Activated CD4-positive, alpha-beta memory T cell treated with anti-CD3 and anti-CD28 coated beads for 36 hours (primary cell): ENCODE measurements at regions of chr6 and their contacts with region 1.

Region 1: DNA sequence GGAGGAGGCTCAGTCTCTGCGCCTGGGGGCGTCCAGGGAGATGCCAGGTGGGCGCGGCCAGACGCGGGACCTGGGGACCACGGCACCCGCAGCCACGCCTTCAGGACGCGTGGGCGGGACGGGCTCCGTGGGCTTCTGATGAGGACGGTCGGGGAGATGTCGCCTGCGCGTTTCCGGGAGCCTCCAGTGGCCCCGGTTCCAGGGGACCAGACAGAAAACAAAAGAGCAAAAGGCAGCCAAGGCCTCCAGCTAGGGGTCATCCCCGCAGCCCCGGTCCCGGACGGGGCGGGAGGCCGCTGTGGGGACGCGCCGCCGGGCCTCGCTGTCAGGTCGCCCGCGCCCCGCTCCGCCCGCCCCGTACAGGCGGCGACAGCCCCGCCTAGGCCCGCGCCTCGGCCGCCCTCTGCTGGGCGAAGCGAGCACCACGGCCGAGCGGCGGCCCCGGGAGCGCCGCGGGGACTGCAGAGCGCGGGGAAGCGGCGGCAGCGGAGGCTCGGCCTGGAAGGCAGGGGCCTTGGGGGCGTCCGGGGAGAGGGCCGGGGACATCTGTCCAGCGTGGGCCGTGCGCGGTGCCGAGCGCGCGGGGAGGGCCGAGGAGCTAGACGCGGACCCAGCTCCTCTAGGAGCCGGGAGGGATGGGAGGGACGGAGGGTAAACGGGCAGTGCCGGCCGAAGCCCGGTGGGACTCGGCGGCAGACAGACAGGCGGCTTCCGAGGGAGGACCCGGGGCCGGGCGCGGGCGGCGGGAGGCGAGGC is 48.7 kb downstream of the TMEM242 start:
- DNase-seq: peak; percentile 90
- H3K4me3 Mint-ChIP-seq: peak overlapping the region; percentile 76
- H3K27ac Mint-ChIP-seq: peak overlapping the region; percentile 89
- H3K4me1 Mint-ChIP-seq: peaks cover 5% of the 10 kb centered on the region
- H3K27me3 Mint-ChIP-seq: no peaks in the 10 kb centered on the region

Region 2: DNA sequence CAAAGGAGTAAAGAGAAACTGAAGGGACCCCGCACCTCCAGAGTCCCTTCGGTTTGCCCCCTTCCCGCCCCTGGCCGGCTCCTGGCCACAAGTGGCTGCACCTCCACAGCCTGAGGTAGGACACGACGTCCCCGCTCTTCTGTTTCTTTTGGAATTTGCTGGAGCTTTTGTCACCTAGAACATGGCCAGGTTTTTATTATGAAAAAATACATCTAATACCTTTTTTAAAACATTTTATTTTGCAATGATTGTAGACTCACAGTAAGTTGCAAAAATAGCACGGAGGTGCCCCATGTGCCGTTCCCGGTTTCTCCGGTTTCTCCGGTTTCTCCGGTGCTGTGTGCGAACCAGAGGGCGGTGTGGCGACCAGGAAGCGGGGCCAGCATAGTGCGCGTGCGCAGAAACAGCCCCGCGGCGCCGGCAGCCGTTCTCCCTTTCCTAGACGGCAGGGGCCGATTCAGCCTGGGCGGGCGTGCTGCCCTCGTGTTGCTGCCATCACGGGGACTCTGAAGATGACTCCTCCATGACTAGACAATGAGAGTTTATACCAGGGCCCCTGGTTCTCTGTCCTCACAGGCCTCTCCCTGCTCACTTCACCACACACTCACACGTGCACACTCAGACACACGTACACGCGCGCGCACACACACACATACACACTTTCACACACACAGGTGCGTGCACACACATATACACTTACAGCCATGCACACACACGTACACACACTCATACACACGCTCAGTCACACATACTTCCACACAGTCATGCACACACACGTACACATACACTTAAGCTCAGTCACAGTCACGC is 53.4 kb before region 1 on chr6:
- CTCF ChIA-PET with region 1: interaction called, 5 read pairs
- POLR2A ChIA-PET with region 1: no interaction called
- intact Hi-C with region 1: loop called (anchors 1 kb)
- DNase-seq: peak; percentile 92
- H3K4me3 Mint-ChIP-seq: peak overlapping the region; percentile 65
- H3K27ac Mint-ChIP-seq: peak overlapping the region; percentile 64
- H3K4me1 Mint-ChIP-seq: peaks cover 32% of the 10 kb centered on the region
- H3K27me3 Mint-ChIP-seq: no peaks in the 10 kb centered on the region